ENCODE measurements at regions of chr19 and their contacts with region 1.

Region 1: DNA sequence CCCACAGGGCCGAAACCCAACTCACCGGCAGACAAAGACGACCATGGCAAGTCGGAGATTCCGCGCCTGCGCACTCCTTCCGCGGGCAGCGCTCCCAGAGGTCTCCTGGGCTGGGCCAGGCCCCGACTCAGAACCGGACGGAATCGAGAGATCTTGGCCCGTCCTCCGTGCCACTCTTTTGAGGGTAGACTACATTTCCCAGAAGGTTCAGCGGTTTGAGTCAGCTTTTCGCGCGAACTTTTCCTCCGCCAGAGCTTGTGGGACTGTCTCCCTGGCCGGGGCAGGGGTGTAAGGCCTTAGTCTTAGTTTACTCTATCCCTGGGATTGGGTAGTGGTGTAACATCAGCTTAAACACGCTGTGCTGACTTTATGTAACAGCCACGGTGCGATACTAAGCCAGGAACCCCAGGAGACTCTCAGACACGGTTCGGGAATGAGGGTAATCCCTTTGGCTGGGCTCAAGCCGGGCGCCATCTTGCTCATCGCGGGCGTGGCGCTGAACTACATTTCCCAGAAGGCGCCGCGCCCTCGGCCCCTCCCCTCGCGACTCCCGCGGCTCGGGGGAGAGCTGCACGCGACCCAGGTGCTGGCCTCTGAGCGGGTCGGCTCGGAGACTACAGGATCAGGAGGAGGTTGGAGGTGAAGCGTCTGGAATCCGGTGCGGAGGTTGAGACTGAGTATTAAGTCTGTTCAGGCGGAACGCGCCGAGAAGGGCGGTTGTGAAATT is at the start of gene ZNF260:
- DNase-seq: peak; percentile 90 to 92 (median 91)
- H3K4me3 ChIP-seq: peak within 1 kb of the TSS; percentile 63 to 84 (median 74)
- H3K4me3 Mint-ChIP-seq: peak within 1 kb of the TSS; percentile 98 to 100
- H3K27ac ChIP-seq: peak within 1 kb of the TSS; percentile 70 to 77
- H3K27ac Mint-ChIP-seq: peak within 1 kb of the TSS; percentile 87 to 97 (median 95)
- H3K4me1 ChIP-seq: peaks cover 14 to 18% of the 10 kb centered on the region in 2 donors
- H3K4me1 Mint-ChIP-seq: peaks cover 18% of the 10 kb centered on the region
- H3K27me3 ChIP-seq: no peaks in the 10 kb centered on the region
- H3K27me3 Mint-ChIP-seq: peaks cover 0 to 5% (median 0%) of the 10 kb centered on the region in 3 donors
- CTCF ChIP-seq: no peak
- polyA plus RNA-seq, gene ZNF260: 0.88 to 2.1 (median 1.2) TPM

Region 2: DNA sequence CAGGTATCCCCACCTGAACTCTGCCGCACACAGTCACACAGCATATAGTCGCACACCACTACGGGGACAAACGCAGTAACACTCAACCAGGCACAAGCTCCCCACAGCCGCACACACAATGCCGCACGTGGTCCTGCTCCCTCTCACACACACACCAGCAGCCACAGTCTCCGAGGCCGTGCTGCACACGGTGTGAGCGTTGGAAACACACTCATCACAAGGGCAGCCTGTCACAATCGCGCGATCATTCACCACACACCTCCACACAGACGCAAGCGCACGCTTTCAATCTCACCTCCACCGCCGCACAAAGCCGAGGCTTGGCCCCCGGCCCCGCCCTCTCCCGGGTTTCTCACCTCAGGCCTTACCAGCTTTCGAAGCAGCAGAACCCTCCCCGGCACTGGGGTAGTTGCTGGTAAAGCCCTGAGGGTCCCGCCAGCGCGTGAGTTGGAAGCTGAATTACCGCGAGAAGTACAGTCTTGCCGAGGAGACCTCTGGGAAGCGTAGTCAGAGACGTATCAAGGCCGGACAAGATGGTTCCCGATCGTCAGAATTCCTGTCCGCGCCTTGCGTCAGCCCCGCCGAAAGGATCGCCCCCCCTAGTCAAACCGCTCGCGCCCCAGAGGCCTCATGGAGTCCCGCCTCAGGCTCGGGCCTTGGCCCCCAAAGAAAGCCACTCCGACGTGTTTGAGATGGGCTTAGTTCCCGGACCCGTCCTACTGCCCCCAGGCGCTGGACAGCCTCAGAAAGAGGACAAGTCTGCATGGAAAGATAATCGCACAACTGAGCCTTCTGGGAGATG is 39.0 kb before region 1 on chr19 and contains the start of gene ZNF566:
- intact Hi-C with region 1: loop called (anchors 1 to 2 kb)
- DNase-seq: peak; percentile 78 to 84 (median 84)
- H3K4me3 ChIP-seq: peak within 1 kb of the TSS; percentile 68 to 99 (median 92)
- H3K4me3 Mint-ChIP-seq: peak within 1 kb of the TSS; percentile 99
- H3K27ac ChIP-seq: peak within 1 kb of the TSS; percentile 64 to 89
- H3K27ac Mint-ChIP-seq: peak within 1 kb of the TSS; percentile 92 to 99 (median 96)
- H3K4me1 ChIP-seq: peaks cover 9 to 18% of the 10 kb centered on the region in 2 donors
- H3K4me1 Mint-ChIP-seq: peaks cover 19% of the 10 kb centered on the region
- H3K27me3 ChIP-seq: no peaks in the 10 kb centered on the region
- H3K27me3 Mint-ChIP-seq: no peaks in the 10 kb centered on the region
- CTCF ChIP-seq: no peak
- polyA plus RNA-seq, gene ZNF566: 0.95 to 3.9 (median 3.6) TPM

Region 3: GRCh38 chr19:36547001-36547732 is 18.8 kb after region 1 on chr19:
- intact Hi-C with region 1: no loop called
- DNase-seq: no peak
- H3K4me3 ChIP-seq: peak overlapping the region in 1 of 3 experiments; percentile 44
- H3K4me3 Mint-ChIP-seq: no peak overlapping the region
- H3K27ac ChIP-seq: no peak overlapping the region
- H3K27ac Mint-ChIP-seq: no peak overlapping the region
- H3K4me1 ChIP-seq: no peaks in the 10 kb centered on the region
- H3K4me1 Mint-ChIP-seq: no peaks in the 10 kb centered on the region
- H3K27me3 ChIP-seq: no peaks in the 10 kb centered on the region
- H3K27me3 Mint-ChIP-seq: no peaks in the 10 kb centered on the region
- CTCF ChIP-seq: no peak

Region 4: GRCh38 chr19:36573020-36573885 is 44.9 kb after region 1 on chr19 and contains the start of gene ZNF529:
- intact Hi-C with region 1: loop called (anchors 2 to 5 kb)
- DNase-seq: peak; percentile 84 to 88 (median 86)
- H3K4me3 ChIP-seq: peak within 1 kb of the TSS; percentile 65 to 92 (median 76)
- H3K4me3 Mint-ChIP-seq: peak within 1 kb of the TSS; percentile 93 to 98
- H3K27ac ChIP-seq: peak within 1 kb of the TSS; percentile 45 to 92
- H3K27ac Mint-ChIP-seq: peak within 1 kb of the TSS; percentile 84 to 96 (median 94)
- H3K4me1 ChIP-seq: peaks cover 17 to 21% of the 10 kb centered on the region in 2 donors
- H3K4me1 Mint-ChIP-seq: peaks cover 22% of the 10 kb centered on the region
- H3K27me3 ChIP-seq: no peaks in the 10 kb centered on the region
- H3K27me3 Mint-ChIP-seq: peaks cover 0 to 3% (median 0%) of the 10 kb centered on the region in 3 donors
- CTCF ChIP-seq: no peak
- polyA plus RNA-seq, gene ZNF529: 1.1 to 2.7 (median 1.3) TPM

Region 5: DNA sequence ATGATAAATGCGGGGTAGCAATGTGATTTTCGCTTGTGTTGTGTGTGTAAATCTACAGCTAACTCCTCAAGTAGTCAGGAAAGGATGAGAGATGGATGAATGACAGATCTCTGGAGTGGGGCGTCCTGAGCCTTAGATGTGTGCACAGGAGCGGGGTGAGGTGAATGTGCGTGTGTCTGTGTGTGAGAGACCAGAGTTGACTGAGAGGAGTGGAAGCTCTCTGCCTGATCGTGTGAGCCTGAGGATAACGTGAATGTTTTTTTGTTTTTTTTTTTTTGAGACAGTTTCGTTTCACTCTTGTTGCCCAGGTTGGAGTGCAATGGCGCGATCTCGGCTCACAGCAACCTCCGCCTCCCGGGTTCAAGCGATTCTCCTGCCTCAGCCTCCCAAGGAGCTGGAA is 137.5 kb after region 1 on chr19:
- intact Hi-C with region 1: loop called (anchors 5 to 10 kb)
- DNase-seq: no peak
- H3K4me3 ChIP-seq: peak overlapping the region; percentile 58 to 85 (median 79)
- H3K4me3 Mint-ChIP-seq: peak overlapping the region; percentile 97 to 100
- H3K27ac ChIP-seq: no peak overlapping the region
- H3K27ac Mint-ChIP-seq: peak overlapping the region in 1 of 7 donors; percentile 16
- H3K4me1 ChIP-seq: peaks cover 8 to 14% of the 10 kb centered on the region in 2 donors
- H3K4me1 Mint-ChIP-seq: peaks cover 13% of the 10 kb centered on the region
- H3K27me3 ChIP-seq: no peaks in the 10 kb centered on the region
- H3K27me3 Mint-ChIP-seq: peaks cover 2 to 5% (median 3%) of the 10 kb centered on the region in 3 donors
- CTCF ChIP-seq: no peak

Region 6: DNA sequence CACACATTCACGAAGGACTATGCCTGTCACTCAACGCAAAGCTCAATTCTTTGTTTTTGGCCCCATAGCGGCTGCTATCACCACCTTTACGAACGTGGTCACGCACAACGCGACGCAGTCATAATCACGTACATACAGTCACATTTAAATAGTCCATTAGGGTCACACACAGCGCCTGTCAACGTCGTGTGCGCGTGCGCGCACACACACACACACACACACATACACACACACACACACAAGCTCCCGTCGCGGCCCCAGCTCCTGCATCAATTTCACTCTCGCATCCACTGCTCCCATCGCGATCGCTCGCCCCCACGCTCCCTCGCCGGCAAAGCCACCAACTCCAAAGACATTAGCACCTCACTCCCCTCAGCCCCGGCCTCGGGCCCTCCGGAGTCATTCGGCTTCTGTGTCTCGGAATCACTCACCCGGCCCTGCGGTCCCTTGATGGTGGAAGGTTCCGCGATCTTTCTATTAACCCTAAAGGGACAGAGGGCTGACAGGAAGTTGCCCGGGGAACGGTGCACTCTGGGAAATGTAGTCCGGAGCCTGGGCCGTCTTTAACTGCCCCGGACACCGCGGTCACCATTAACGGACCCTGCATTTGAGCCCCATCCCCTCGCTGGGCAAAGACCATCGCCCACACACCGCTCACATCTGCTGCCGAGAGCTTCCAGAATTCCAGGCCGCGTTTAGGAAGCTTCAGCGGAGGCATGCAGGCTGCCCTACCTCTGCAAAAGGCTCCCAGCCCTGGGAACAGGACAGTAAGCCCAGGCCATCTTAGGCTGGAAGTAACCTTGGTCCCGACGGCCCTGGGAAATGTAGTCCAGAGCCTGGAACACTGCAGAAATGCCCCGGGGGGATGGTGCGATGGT is 309.8 kb after region 1 on chr19 and contains the start of gene ZNF790:
- intact Hi-C with region 1: loop called in 1 of 2 experiments (anchors 5 kb)
- DNase-seq: peak; percentile 83 to 86 (median 84)
- H3K4me3 ChIP-seq: peak within 1 kb of the TSS; percentile 61 to 92 (median 64)
- H3K4me3 Mint-ChIP-seq: no peak within 1 kb of the TSS
- H3K27ac ChIP-seq: peak within 1 kb of the TSS; percentile 83 to 86
- H3K27ac Mint-ChIP-seq: no peak within 1 kb of the TSS
- H3K4me1 ChIP-seq: peaks cover 14 to 18% of the 10 kb centered on the region in 2 donors
- H3K4me1 Mint-ChIP-seq: no peaks in the 10 kb centered on the region
- H3K27me3 ChIP-seq: no peaks in the 10 kb centered on the region
- H3K27me3 Mint-ChIP-seq: no peaks in the 10 kb centered on the region
- CTCF ChIP-seq: no peak
- polyA plus RNA-seq, gene ZNF790: 0.35 to 2.7 (median 2.3) TPM